H1 (cell line): ENCODE measurements at regions of chr2 and their contacts with region 1.

Region 1: GRCh38 chr2:43169987-43170386 is 56.4 kb downstream of the ZFP36L2 start:
- DNase-seq: peak in 1 of 2 experiments; percentile 88
- H3K4me3 ChIP-seq: no peak overlapping the region
- H3K27ac ChIP-seq: no peak overlapping the region
- H3K4me1 ChIP-seq: peaks cover 0 to 15% (median 2%) of the 10 kb centered on the region in 4 experiments; a peak in 6 of 7 replicates
- H3K27me3 ChIP-seq: no peaks in the 10 kb centered on the region
- CTCF ChIP-seq: peak; percentile 83 to 84 (median 83)
- EP300 ChIP-seq: no peak
- POLR2A ChIP-seq: no peak
- RAD21 ChIP-seq: peak; percentile 71 to 82

Region 2: DNA sequence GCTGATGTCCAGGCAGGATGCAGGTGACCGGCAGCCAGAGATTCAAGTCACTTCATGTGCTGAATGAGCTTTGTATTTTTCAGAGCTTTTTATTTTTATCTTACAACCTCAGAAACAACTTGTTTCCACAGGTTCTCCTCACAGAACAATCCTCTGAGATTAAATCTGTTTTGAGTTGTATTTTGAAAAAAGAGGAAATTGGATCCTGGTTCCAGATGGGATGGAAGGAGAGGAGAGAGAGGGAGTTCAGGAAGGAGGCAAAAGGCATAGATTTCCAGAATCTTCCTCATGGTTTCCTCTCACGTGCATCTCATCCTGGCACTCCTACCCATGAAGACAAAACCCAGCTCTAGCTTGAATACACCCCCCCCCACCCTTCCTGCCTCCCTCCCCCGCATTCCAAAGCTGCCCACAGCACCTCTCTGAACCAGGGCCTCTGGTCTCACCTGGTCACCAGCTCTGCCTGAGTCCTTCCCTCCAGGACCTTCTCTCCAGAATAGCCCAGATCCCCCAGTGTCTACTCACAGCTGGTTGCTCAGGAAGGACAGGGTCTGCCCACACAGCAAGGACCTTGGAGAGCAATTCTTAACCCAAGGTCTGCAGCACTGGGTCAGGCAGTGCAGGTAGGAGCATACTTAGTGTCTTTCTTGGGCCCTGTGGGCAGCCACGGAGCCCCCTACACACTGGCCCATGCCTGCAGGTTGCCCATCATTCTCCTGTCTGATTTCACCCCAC is 48.2 kb before region 1 on chr2:
- CTCF ChIA-PET with region 1: interaction called, 12 read pairs
- POLR2A ChIA-PET with region 1: no interaction called
- DNase-seq: no peak
- H3K4me3 ChIP-seq: no peak overlapping the region
- H3K27ac ChIP-seq: no peak overlapping the region
- H3K4me1 ChIP-seq: 0 out of 7 replicates have a peak, but pooled peaks cover 0 to 3% (median 0%) of the 10 kb centered on the region in 4 experiments
- H3K27me3 ChIP-seq: no peaks in the 10 kb centered on the region
- CTCF ChIP-seq: no peak
- EP300 ChIP-seq: no peak
- POLR2A ChIP-seq: no peak
- RAD21 ChIP-seq: no peak

Region 3: GRCh38 chr2:43186679-43187374 is 16.8 kb after region 1 on chr2:
- CTCF ChIA-PET with region 1: interaction called, 85 read pairs
- POLR2A ChIA-PET with region 1: no interaction called
- DNase-seq: no peak
- H3K4me3 ChIP-seq: no peak overlapping the region
- H3K27ac ChIP-seq: no peak overlapping the region
- H3K4me1 ChIP-seq: peaks cover 0 to 23% (median 6%) of the 10 kb centered on the region in 4 experiments; a peak in 5 of 7 replicates
- H3K27me3 ChIP-seq: no peaks in the 10 kb centered on the region
- CTCF ChIP-seq: no peak
- EP300 ChIP-seq: no peak
- POLR2A ChIP-seq: no peak
- RAD21 ChIP-seq: no peak

Region 4: GRCh38 chr2:43199492-43200481 is 29.8 kb after region 1 on chr2:
- CTCF ChIA-PET with region 1: interaction called, 28 read pairs
- POLR2A ChIA-PET with region 1: no interaction called
- DNase-seq: no peak
- H3K4me3 ChIP-seq: no peak overlapping the region
- H3K27ac ChIP-seq: no peak overlapping the region
- H3K4me1 ChIP-seq: peaks cover 4 to 9% (median 7%) of the 10 kb centered on the region in 4 experiments
- H3K27me3 ChIP-seq: no peaks in the 10 kb centered on the region
- CTCF ChIP-seq: no peak
- EP300 ChIP-seq: no peak
- POLR2A ChIP-seq: no peak
- RAD21 ChIP-seq: no peak

Region 5: DNA sequence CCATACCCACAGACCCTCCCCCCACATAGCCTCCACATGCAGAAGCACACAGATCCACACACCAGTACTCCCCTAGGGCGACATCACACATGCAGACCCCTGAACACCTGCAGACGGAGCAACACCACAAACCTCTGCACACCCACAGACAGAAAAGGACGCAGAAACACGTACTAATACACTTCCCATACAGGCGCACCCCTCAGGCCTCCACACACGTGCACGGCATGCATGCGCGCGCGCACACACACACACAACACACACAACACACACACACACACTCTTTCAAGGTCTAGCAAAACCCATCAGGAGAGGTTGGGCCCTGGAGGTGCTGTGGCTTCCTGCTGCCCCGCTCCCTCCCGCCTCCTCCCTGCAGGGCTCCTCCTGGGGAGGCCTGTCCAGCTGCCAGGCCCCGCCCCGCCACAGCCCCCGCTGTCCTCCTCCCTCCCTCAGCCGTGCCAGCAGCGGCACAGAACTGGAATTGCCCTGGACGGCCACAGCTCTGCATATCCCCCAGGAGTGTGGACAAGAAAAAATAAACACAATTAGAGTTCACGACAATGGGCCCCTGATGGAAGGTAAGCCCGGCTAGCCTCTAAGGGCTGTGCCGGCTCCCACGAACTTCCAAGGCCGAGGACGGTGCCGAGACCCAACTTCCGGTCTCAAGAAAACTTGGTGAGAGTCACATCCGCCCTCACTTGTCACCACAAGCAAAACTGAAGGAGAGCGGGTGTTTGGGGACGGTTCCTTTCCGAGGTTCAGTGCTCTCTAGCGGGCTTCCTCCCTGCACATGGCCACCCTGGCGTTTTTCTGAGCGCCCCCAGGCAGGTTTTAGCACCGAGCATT is 49.6 kb after region 1 on chr2:
- CTCF ChIA-PET with region 1: interaction called, 67 read pairs
- POLR2A ChIA-PET with region 1: interaction called, 8 read pairs
- DNase-seq: peak in 1 of 2 experiments; percentile 76
- H3K4me3 ChIP-seq: peak overlapping the region; percentile 14 to 83 (median 34); a peak in 7 of 8 replicates
- H3K27ac ChIP-seq: peak overlapping the region; percentile 65; the same call in 1 of the 2 replicates
- H3K4me1 ChIP-seq: peaks cover 20 to 43% (median 25%) of the 10 kb centered on the region in 4 experiments
- H3K27me3 ChIP-seq: no peaks in the 10 kb centered on the region
- CTCF ChIP-seq: no peak
- EP300 ChIP-seq: no peak
- POLR2A ChIP-seq: no peak
- RAD21 ChIP-seq: no peak